ENCODE measurements at regions of chr14 and their contacts with region 1.

Region 1: GRCh38 chr14:24299255-24300195 is at the starts of genes DHRS1 and NOP9:
- DNase-seq: peak; percentile 91
- H3K4me3 Mint-ChIP-seq: peak within 1 kb of the TSS; percentile 95
- H3K27ac Mint-ChIP-seq: peak within 1 kb of the TSS; percentile 78
- H3K4me1 Mint-ChIP-seq: peaks cover 33% of the 10 kb centered on the region
- H3K27me3 Mint-ChIP-seq: no peaks in the 10 kb centered on the region
- CTCF ChIP-seq: no peak
- total RNA-seq, gene DHRS1: 29.2 and 29.7 TPM in 2 replicates
- total RNA-seq, gene NOP9: 29.8 and 31.9 TPM in 2 replicates

Region 2: DNA sequence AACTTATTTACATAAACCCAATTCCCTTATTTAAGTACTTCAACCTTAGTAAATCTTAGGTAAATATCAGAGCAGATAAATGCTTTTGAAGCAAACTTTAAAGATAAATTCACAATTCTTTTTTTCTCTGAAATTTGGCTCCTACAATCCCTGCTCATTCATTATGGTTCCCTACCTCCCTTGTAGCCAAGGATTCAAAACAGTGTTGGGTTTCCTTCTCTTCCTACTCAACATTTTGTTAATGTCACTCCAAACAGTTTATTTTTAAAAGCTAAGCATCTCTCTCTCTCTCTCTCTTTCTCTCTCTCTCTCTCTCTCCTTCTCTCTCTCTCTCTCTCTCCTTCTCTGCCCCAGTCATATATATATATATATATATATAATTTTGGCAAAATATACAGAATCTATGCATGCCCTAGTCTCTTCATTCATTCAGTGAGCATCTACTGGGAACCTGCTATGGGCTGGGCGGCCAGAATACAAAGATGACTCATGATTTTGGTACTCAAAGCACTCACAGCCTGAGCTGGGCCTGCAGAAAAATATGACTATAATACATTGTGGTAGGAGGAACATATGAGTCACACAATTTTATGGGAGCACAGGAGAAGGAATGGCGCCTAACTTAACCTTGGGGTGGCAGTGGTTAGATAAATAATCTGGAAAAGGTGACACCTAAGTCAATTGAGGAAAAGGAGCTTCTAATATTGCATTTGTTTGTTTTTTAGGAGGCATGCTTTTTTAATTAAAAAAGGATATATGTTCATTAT is 469.6 kb before region 1 on chr14:
- CTCF ChIA-PET with region 1: no interaction called
- POLR2A ChIA-PET with region 1: no interaction called
- intact Hi-C with region 1: no loop called
- DNase-seq: peak; percentile 90
- H3K4me3 Mint-ChIP-seq: no peak overlapping the region
- H3K27ac Mint-ChIP-seq: no peak overlapping the region
- H3K4me1 Mint-ChIP-seq: no peaks in the 10 kb centered on the region
- H3K27me3 Mint-ChIP-seq: no peaks in the 10 kb centered on the region
- CTCF ChIP-seq: no peak

Region 3: DNA sequence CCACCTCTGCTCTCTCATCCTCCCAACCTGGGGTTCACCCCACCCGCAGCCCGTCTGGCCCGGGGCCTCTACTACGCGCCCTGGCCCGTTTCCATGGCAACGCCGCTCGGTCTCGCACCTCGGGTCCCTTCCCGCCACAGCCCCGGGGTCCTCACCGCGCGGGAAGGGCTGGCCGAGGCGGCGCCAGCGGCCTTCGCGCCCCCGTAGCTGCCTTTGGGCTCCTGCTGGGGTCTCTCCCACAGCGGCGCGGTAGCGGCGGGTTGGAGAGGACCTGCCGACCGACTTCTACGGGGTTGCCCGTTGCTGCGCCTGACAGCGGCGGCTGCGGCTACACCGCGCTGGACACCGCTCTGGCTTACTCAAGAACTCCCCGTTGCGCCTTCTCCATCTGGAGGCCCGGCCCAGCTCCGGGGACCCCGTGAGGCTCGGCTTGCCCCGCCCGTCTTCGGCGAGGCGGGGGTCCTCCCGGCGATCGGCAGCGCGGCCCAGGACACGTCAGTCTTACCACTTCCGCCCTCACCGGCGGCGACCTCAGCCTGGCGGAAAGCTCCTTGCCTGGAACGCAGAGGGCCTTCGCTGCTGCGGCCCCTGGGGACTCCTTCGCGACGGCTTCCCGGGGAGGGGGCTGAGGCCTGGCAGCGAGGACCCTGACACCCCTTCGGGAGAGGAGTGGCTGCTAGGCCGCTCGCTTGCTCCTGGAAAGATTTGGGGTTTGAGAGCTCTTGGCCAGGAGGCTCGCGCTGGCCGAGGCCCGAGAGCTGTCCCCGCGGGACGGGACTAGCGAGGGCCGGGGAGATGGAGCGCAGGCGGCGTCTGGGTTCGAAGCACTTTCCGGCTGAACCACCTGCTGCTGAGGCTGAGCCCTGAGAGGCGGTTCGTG is 104.1 kb before region 1 on chr14 and contains the start of gene TM9SF1:
- CTCF ChIA-PET with region 1: interaction called, 17 read pairs
- POLR2A ChIA-PET with region 1: interaction called, 24 read pairs
- intact Hi-C with region 1: no loop called
- DNase-seq: peak; percentile 84
- H3K4me3 Mint-ChIP-seq: peak within 1 kb of the TSS; percentile 81
- H3K27ac Mint-ChIP-seq: peak within 1 kb of the TSS; percentile 96
- H3K4me1 Mint-ChIP-seq: peaks cover 18% of the 10 kb centered on the region
- H3K27me3 Mint-ChIP-seq: no peaks in the 10 kb centered on the region
- CTCF ChIP-seq: no peak
- total RNA-seq, gene TM9SF1: 67.8 and 103 TPM in 2 replicates

Region 4: GRCh38 chr14:24241829-24242443 is 57.6 kb before region 1 on chr14:
- CTCF ChIA-PET with region 1: interaction called, 414 read pairs
- POLR2A ChIA-PET with region 1: interaction called, 187 read pairs
- intact Hi-C with region 1: loop called (anchors 1 kb)
- DNase-seq: peak; percentile 94
- H3K4me3 Mint-ChIP-seq: peak overlapping the region; percentile 86
- H3K27ac Mint-ChIP-seq: peak overlapping the region; percentile 100
- H3K4me1 Mint-ChIP-seq: peaks cover 30% of the 10 kb centered on the region
- H3K27me3 Mint-ChIP-seq: no peaks in the 10 kb centered on the region
- CTCF ChIP-seq: peak; percentile 37

Region 5: DNA sequence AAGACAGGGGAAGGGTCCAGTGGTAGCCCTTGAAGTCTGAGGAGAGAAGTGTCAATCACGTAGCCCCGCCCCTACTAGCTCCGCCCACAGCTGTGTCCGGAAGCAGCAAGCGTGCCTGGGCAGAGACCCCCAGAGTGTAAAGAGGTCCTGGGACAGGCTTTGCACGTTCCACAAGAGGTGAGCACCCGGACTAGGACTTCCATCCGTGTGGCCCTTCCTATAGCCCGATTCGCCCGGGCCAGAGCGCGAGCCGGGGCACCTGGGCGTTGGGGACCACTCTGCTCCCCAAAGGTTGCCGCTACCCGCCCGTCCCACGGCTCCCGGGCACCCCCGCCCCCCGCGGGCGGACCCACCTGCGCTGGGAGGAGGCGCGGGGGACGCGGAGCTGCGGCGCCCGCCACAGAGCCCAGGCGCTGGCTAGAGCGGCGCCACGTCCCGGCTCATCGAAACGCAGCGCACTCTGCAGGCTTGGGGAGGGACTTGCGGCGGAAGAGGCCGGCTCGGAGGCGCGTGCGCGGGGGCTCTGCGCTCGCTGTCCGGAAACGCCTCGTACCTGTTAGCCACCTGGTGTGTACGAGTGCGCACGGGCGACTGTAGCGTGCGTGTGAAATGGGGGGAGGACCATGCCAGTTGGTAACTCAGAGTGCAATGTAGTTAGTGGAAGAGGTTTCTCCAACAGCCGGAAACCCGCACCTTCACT is 28.2 kb before region 1 on chr14 and contains the start of gene RABGGTA:
- CTCF ChIA-PET with region 1: interaction called, 392 read pairs
- POLR2A ChIA-PET with region 1: interaction called, 142 read pairs
- intact Hi-C with region 1: loop called (anchors 1 kb)
- DNase-seq: peak; percentile 88
- H3K4me3 Mint-ChIP-seq: peak within 1 kb of the TSS; percentile 89
- H3K27ac Mint-ChIP-seq: peak within 1 kb of the TSS; percentile 16
- H3K4me1 Mint-ChIP-seq: peaks cover 43% of the 10 kb centered on the region
- H3K27me3 Mint-ChIP-seq: no peaks in the 10 kb centered on the region
- CTCF ChIP-seq: peak; percentile 67
- total RNA-seq, gene RABGGTA: 51.7 and 75.0 TPM in 2 replicates

Region 6: GRCh38 chr14:24310646-24311604 is 11.4 kb after region 1 on chr14 and contains the start of gene LTB4R:
- CTCF ChIA-PET with region 1: interaction called, 145 read pairs
- POLR2A ChIA-PET with region 1: interaction called, 83 read pairs
- intact Hi-C with region 1: no loop called
- DNase-seq: peak; percentile 72
- H3K4me3 Mint-ChIP-seq: peak within 1 kb of the TSS; percentile 69
- H3K27ac Mint-ChIP-seq: no peak within 1 kb of the TSS
- H3K4me1 Mint-ChIP-seq: peaks cover 35% of the 10 kb centered on the region
- H3K27me3 Mint-ChIP-seq: no peaks in the 10 kb centered on the region
- CTCF ChIP-seq: peak; percentile 19
- total RNA-seq, gene LTB4R: 15.8 and 19.9 TPM in 2 replicates